Activated naive CD4-positive, alpha-beta T cell treated with anti-CD3 and anti-CD28 coated beads for 36 hours (primary cell): ENCODE measurements at regions of chr9 and their contacts with region 1.

Region 1: DNA sequence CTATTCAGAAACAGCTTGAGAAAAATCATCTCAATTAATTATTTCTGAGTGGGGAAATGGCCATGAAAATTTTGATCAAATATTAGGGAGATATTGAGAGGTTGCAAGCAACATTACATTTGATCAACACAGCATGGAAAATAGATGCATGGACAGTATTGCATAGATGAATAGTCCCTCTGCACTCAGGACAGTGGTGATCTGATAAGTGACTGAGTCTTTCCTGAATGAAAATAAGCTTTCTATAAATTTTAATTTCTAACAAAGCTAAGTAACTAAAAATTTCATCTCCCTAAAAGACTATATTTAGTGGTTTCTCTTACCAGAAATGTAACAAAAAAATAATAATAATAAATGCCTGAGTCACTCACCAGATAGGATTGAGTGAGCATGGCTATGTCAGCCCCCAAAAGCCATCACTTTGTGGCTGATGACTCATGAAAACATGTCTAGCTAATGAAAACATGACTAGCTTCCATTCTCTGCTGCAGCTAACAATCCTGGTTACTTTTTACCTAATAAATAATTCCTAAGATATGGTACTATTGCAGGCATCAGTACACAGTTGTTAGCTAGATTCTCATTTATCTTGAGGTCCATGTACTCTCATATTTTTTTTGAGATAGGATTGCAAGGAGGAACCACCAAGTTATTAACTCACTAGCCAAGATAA is 1294.8 kb upstream of the ACO1 start:
- DNase-seq: no peak
- H3K4me3 Mint-ChIP-seq: no peak overlapping the region
- H3K27ac Mint-ChIP-seq: no peak overlapping the region
- H3K4me1 Mint-ChIP-seq: no peaks in the 10 kb centered on the region
- H3K27me3 Mint-ChIP-seq: no peaks in the 10 kb centered on the region

Region 2: DNA sequence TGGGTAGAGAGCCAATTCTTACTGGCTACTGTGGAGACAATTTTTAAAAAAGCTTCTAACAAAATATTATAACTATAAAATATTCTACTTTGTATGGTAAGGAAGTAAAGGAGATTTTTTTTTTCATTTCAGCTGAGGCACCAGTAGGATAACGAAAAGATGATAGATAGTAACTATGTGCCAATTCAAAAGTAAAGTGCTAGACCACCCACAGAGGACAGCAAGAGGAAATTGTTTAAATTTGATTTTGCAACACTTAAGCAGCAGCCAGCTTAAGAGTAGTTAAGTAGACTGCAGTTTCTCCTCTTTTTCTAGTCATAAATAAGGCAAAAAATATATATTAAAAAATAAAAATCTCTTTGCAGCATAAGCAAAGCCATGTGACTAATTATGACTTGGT is 244.5 kb before region 1 on chr9:
- CTCF ChIA-PET with region 1: no interaction called
- intact Hi-C with region 1: no loop called
- DNase-seq: no peak
- H3K4me3 Mint-ChIP-seq: no peak overlapping the region
- H3K27ac Mint-ChIP-seq: no peak overlapping the region
- H3K4me1 Mint-ChIP-seq: no peaks in the 10 kb centered on the region
- H3K27me3 Mint-ChIP-seq: peaks cover 13% of the 10 kb centered on the region

Region 3: DNA sequence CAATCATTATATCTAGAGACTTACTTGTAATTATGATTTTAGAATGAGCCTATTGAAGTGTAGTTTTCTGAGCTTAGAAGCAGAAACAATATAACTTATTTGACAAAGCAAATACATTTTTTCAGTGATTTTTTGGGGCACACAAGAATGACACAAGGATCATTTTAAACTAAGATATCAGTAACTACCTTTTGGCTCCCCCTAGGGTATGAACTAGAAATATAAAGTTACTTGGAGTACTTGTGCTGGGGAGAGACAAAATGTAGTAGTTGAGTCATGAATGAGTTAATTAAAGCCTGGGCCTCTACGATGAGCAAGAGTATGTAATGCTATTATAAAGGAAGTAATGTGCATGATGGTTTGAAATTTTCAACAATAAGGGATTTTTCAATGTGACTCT is 50.6 kb after region 1 on chr9:
- CTCF ChIA-PET with region 1: no interaction called
- intact Hi-C with region 1: no loop called
- DNase-seq: no peak
- H3K4me3 Mint-ChIP-seq: no peak overlapping the region
- H3K27ac Mint-ChIP-seq: no peak overlapping the region
- H3K4me1 Mint-ChIP-seq: peaks cover 2% of the 10 kb centered on the region
- H3K27me3 Mint-ChIP-seq: no peaks in the 10 kb centered on the region

Region 4: DNA sequence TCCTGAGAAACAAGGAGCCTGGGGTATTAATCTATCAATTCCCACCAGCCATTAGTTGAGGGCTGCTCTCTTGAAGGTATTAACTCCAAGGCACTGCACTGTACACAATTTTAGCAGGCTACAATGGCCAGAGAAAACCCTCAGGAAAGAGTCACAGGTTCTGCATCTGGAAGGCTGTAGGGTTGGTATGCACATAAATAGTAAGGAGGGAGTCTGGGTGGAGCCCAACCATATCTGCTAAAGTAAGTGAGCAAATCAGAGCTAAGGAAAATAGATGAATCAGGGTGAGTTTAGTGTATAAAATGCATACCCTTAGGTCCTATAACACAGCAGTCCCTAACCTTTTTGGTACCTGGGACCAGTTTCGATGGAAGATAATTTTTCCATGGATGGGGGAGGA is 1711.8 kb after region 1 on chr9:
- CTCF ChIA-PET with region 1: no interaction called
- intact Hi-C with region 1: loop called (anchors 10 kb)
- DNase-seq: no peak
- H3K4me3 Mint-ChIP-seq: no peak overlapping the region
- H3K27ac Mint-ChIP-seq: no peak overlapping the region
- H3K4me1 Mint-ChIP-seq: no peaks in the 10 kb centered on the region
- H3K27me3 Mint-ChIP-seq: peaks cover 5% of the 10 kb centered on the region